Esophagus squamous epithelium (tissue), 5 donors: ENCODE measurements at regions of chr20 and their contacts with region 1.

Region 1: DNA sequence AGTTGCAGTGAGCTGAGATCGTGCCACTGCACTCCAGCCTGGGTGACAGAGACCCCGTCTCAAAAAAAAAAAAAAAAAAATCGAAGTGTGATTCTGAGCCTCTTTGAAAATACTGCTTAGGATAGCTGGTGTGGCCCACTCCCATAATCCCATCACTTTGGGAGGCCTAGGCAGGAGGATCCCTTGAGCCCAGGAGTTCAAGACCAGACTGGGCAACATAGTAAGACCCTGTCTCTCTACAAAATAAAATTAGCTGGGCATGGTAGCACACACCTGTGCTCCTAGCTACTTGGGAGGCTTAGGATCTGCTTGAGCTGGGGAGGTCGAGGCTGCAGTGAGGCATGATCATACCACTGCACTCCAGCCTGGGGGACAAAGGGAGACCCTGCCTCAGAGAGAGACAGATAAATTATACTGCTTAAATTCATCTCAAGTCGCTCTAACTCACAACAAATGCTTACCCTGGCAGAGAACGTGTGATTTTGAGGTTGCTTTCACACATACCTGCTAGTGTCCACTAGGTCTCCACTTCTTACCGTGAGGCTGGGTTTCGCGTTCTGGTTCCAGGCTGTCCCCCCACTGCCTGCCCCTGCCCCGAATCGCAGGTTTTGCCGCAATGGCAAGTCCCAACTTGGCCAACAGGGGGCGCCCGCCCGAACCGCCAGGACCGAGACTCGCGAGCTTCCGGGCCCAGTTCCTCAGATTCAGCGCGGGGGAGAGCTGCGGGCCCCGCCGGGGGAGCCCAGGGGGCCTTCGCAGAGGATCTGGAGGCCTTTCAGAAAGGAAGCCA is 12.3 kb upstream of the TMC2 start:
- DNase-seq: no peak
- H3K4me3 ChIP-seq: peak overlapping the region; percentile 67 to 83 (median 70)
- H3K27ac ChIP-seq: peak overlapping the region; percentile 83 to 93 (median 88)
- H3K4me1 ChIP-seq: peaks cover 3 to 41% (median 4%) of the 10 kb centered on the region in 3 donors
- H3K27me3 ChIP-seq: no peaks in the 10 kb centered on the region
- CTCF ChIP-seq: peak; percentile 90 to 97 (median 94)
- POLR2A ChIP-seq: peak in 3 of 4 donors; percentile 34 to 69 (median 52)

Region 2: DNA sequence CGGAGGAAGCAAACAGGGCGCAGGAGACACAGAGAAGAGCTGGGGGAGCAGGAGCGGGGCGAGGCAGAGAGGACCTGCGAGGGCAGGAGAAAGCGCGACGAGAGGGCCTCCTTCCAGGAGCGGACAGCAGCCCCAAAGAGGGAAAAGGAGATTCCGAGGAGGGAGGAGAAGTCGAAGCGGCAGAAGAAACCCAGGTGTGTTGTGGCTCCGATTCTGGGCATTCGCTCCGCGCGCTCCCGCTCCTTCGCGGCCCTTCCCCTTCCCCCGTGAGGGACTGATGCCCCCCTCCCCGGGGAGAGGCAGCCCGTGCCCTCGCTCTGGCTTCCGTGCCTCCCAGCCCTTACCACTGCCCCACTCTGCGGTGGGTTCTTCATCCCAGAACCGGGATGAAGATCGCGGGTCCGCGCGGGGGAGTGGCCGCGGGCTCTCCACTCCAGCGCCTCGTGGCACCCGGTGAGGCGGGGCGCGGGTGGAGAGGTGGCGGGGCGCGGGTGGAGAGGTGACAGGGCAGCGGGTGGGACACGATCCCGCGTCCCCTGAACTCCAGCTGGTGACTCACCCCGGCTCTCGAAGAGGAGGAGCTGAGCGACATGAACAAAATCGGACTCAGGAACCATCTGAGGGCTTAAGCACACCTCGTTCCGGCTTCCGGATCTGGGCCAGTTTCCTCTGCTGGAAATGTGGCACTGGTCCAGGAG is 34.6 kb after region 1 on chr20:
- intact Hi-C with region 1: no loop called
- DNase-seq: no peak
- H3K4me3 ChIP-seq: peak overlapping the region in 3 of 4 donors; percentile 11 to 51 (median 37)
- H3K27ac ChIP-seq: no peak overlapping the region
- H3K4me1 ChIP-seq: peaks cover 8 to 12% (median 10%) of the 10 kb centered on the region in 3 donors
- H3K27me3 ChIP-seq: peaks cover 10 to 80% (median 10%) of the 10 kb centered on the region in 4 donors
- CTCF ChIP-seq: no peak
- POLR2A ChIP-seq: no peak

Region 3: GRCh38 chr20:2643708-2644107 is 119.6 kb after region 1 on chr20:
- intact Hi-C with region 1: loop called (anchors 10 kb)
- DNase-seq: no peak
- H3K4me3 ChIP-seq: no peak overlapping the region
- H3K27ac ChIP-seq: no peak overlapping the region
- H3K4me1 ChIP-seq: peaks cover 0 to 8% (median 0%) of the 10 kb centered on the region in 3 donors
- H3K27me3 ChIP-seq: no peaks in the 10 kb centered on the region
- CTCF ChIP-seq: no peak
- POLR2A ChIP-seq: no peak

Region 4: DNA sequence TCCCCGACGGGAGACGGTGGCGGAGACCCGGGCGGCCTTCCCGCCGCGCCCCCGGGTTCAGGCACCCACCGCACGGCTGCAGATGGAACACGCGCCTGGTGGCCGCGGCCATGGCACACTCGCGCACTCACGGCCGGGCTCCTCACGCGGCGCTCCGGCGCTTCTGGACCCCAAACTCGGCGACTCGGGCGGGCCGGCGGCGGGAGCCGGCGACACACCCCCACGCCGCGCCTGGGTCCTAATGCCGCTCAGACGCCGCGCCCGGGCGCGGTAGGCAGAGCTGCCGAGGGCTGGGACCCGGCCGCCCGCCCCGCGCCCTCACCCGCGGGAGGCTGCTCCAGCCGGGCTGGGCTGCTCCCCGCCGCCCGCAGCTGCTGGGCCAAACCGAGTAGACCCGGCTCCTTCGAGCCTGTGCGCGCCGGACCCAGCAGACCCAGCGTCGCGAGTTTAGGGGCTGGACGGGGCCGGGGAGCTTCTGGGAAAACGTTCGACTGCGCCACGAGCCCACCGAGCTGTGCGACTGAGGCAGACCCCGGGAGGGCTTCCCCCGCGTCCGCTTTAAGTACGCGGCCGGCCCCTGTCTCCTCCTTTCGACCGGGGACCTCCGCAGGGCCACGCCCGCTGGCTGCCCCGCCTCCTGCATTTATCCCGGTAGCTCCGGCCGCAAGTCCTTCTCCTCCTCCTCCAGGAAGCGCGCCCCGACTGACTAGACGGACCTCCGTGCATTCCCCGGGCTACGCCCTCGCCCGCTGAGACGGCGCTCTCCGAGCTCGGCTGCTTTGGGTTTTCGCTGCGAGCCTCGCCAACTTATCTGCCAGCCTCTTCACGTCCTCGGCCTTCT is 715.1 kb after region 1 on chr20 and contains the start of gene SLC4A11:
- intact Hi-C with region 1: no loop called
- DNase-seq: no peak
- H3K4me3 ChIP-seq: peak within 1 kb of the TSS; percentile 58 to 93 (median 80)
- H3K27ac ChIP-seq: peak within 1 kb of the TSS; percentile 74 to 82 (median 79)
- H3K4me1 ChIP-seq: peaks cover 23 to 62% (median 37%) of the 10 kb centered on the region in 3 donors
- H3K27me3 ChIP-seq: peaks cover 0 to 79% (median 0%) of the 10 kb centered on the region in 4 donors
- CTCF ChIP-seq: no peak
- POLR2A ChIP-seq: no peak
- total RNA-seq, gene SLC4A11: 7.2 to 24.7 (median 17.7) TPM